ENCODE measurements at regions of chr14 and their contacts with region 1.

Region 1: GRCh38 chr14:77053046-77053841 is 24.7 kb upstream of the IRF2BPL start:
- DNase-seq: peak; percentile 90
- ATAC-seq: peak; percentile 86
- H3K4me3 Mint-ChIP-seq: no peak overlapping the region
- H3K27ac Mint-ChIP-seq: peak overlapping the region; percentile 78
- H3K4me1 Mint-ChIP-seq: peaks cover 18% of the 10 kb centered on the region
- H3K27me3 Mint-ChIP-seq: no peaks in the 10 kb centered on the region

Region 2: DNA sequence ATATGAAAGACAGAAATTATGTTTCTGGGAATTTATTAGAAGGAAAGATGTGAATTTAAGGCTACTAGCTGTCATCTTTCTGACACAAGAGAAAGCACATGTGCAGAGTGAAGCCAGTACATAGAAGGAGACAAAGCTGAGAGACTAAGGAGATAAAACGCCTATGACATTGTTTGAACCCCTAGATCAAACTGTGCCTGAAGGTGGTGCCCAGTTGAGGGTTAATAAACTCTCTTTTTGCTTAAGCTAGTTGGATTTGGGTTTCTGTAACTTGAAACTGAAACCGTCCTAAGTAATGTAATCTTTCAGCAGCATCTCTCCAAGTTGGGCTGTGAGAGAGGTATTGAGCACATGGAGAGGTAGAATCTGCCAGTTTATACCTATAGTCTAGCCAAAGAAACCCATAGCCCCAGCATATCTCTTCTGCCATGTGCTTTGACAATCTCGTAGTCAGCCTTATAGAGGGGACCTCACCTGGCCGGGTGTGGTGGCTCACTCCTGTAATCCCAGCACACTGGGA is 142.8 kb before region 1 on chr14:
- CTCF ChIA-PET with region 1: interaction called, 58 read pairs
- POLR2A ChIA-PET with region 1: no interaction called
- intact Hi-C with region 1: loop called (anchors 1 kb)
- DNase-seq: no peak
- ATAC-seq: no peak
- H3K4me3 Mint-ChIP-seq: no peak overlapping the region
- H3K27ac Mint-ChIP-seq: no peak overlapping the region
- H3K4me1 Mint-ChIP-seq: peaks cover 26% of the 10 kb centered on the region
- H3K27me3 Mint-ChIP-seq: no peaks in the 10 kb centered on the region

Region 3: DNA sequence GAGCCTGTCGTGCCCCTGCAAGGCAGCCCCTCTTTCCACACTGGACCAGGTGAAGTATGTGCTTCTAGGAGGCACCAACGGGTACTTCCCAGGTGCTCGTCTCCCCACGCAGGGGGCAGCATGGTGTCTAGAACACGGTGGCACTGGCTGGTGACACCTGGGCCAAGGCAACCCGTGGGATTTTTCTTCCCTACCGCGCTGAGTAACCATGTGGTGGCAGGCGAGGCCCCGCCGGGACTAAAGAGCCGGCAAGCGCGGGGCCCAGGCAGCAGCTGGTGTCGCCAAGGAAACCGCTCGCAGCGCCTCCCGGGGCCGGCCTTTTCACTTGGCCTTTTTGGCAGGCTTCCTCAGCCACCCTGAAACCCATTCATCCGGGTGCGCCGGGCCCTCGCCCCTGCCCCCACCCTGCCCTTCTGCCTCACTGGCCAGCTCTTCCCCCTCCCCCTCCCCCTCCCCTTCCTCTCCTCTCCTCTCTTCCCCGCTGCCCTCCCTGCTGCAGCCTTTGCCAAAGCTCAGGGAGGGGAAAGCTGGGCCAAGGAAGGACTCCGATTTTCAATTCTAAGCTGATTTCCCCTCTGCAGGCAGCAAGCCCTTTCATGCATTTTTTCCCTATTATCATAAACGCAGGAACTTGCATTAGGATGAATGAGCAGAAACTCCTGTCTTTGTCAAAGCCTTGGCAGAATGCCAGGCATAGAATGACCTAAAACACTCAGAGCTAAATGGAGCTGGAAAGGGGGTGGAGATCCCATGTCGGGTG is 106.0 kb before region 1 on chr14:
- CTCF ChIA-PET with region 1: interaction called, 8 read pairs
- POLR2A ChIA-PET with region 1: no interaction called
- intact Hi-C with region 1: loop called (anchors 1 kb)
- DNase-seq: peak; percentile 92
- ATAC-seq: peak; percentile 81
- H3K4me3 Mint-ChIP-seq: peak overlapping the region; percentile 3
- H3K27ac Mint-ChIP-seq: peak overlapping the region; percentile 81
- H3K4me1 Mint-ChIP-seq: peaks cover 56% of the 10 kb centered on the region
- H3K27me3 Mint-ChIP-seq: no peaks in the 10 kb centered on the region

Region 4: GRCh38 chr14:77023001-77023996 is 29.9 kb before region 1 on chr14:
- CTCF ChIA-PET with region 1: interaction called, 10 read pairs
- POLR2A ChIA-PET with region 1: no interaction called
- intact Hi-C with region 1: loop called in 1 of 2 experiments (anchors 1 kb)
- DNase-seq: peak; percentile 77
- ATAC-seq: peak; percentile 24
- H3K4me3 Mint-ChIP-seq: peak overlapping the region; percentile 59
- H3K27ac Mint-ChIP-seq: peak overlapping the region; percentile 81
- H3K4me1 Mint-ChIP-seq: peaks cover 43% of the 10 kb centered on the region
- H3K27me3 Mint-ChIP-seq: no peaks in the 10 kb centered on the region

Region 5: GRCh38 chr14:77040059-77040740 is 13.0 kb before region 1 on chr14:
- CTCF ChIA-PET with region 1: interaction called, 25 read pairs
- POLR2A ChIA-PET with region 1: no interaction called
- intact Hi-C with region 1: loop called in 1 of 2 experiments (anchors 1 kb)
- DNase-seq: peak; percentile 98
- ATAC-seq: peak; percentile 66
- H3K4me3 Mint-ChIP-seq: peak overlapping the region; percentile 63
- H3K27ac Mint-ChIP-seq: peak overlapping the region; percentile 93
- H3K4me1 Mint-ChIP-seq: peaks cover 89% of the 10 kb centered on the region
- H3K27me3 Mint-ChIP-seq: no peaks in the 10 kb centered on the region

Region 6: GRCh38 chr14:77139540-77140358 is 86.5 kb after region 1 on chr14:
- CTCF ChIA-PET with region 1: no interaction called
- POLR2A ChIA-PET with region 1: no interaction called
- intact Hi-C with region 1: no loop called
- DNase-seq: peak; percentile 79
- ATAC-seq: peak; percentile 92
- H3K4me3 Mint-ChIP-seq: no peak overlapping the region
- H3K27ac Mint-ChIP-seq: no peak overlapping the region
- H3K4me1 Mint-ChIP-seq: peaks cover 15% of the 10 kb centered on the region
- H3K27me3 Mint-ChIP-seq: peaks cover 64% of the 10 kb centered on the region